CD8-positive, alpha-beta T cell (primary cell): ENCODE measurements at regions of chr2 and their contacts with region 1.

Region 1: DNA sequence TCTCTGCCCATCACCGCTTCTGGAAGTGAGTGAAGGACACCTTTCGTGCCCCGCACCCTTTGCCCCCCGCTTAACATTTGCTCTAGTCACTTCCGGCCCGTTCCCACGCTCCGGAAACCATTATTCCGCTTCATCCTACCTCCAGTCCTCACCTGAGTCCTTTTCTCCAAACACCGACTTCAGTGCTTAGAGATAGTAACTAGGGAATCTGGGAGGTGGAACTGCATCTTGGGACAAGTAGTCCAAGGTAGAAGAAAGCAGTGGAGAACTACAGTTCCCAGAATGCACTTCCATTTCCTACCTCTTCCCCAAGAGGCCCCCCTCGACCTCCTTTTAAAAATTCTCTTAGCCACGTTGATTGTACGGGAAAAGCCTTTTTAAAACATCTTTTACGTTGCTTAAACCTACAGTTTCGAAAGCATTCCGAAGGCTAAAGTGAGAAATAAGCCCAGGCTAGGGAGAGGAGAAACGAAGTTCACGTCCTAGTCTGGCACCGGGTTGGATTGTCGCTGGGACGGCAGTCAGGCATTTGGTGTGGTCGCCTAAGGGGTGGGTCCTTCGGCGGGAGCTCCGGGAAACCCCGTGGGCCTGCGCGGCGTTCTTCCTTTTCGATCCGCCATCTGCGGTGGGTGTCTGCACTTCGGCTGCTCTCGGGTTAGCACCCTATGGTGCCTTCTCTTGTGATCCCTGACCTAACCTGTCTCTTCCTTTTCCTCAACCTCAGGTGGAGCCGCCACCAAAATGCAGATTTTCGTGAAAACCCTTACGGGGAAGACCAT is at the starts of genes CLHC1 and RPS27A:
- DNase-seq: peak; percentile 89 to 97 (median 94)
- ATAC-seq: peak; percentile 87
- H3K4me3 ChIP-seq: peak within 1 kb of the TSS; percentile 97 to 99
- H3K4me3 Mint-ChIP-seq: peak within 1 kb of the TSS; percentile 93
- H3K27ac ChIP-seq: peak within 1 kb of the TSS; percentile 92 to 99
- H3K27ac Mint-ChIP-seq: peak within 1 kb of the TSS; percentile 97
- H3K4me1 ChIP-seq: peaks cover 35% of the 10 kb centered on the region
- H3K4me1 Mint-ChIP-seq: peaks cover 68% of the 10 kb centered on the region
- H3K27me3 ChIP-seq: no peaks in the 10 kb centered on the region
- H3K27me3 Mint-ChIP-seq: no peaks in the 10 kb centered on the region
- CTCF ChIP-seq: no peak
- total RNA-seq, gene CLHC1: 2.2 to 2.3 TPM
- total RNA-seq, gene RPS27A: 2,135 to 2,231 TPM

Region 2: GRCh38 chr2:53767405-53768241 is 1464.7 kb before region 1 on chr2 and contains the start of gene CHAC2:
- CTCF ChIA-PET with region 1: no interaction called
- POLR2A ChIA-PET with region 1: no interaction called
- intact Hi-C with region 1: loop called (anchors 5 kb)
- DNase-seq: peak; percentile 50 to 92 (median 84)
- ATAC-seq: peak; percentile 87
- H3K4me3 ChIP-seq: peak within 1 kb of the TSS; percentile 71 to 96
- H3K4me3 Mint-ChIP-seq: peak within 1 kb of the TSS; percentile 92
- H3K27ac ChIP-seq: peak within 1 kb of the TSS; percentile 70 to 86
- H3K27ac Mint-ChIP-seq: peak within 1 kb of the TSS; percentile 93
- H3K4me1 ChIP-seq: peaks cover 9% of the 10 kb centered on the region
- H3K4me1 Mint-ChIP-seq: peaks cover 29% of the 10 kb centered on the region
- H3K27me3 ChIP-seq: no peaks in the 10 kb centered on the region
- H3K27me3 Mint-ChIP-seq: no peaks in the 10 kb centered on the region
- CTCF ChIP-seq: peak; percentile 31
- total RNA-seq, gene CHAC2: 0.87 to 1.0 TPM

Region 3: GRCh38 chr2:53970724-53971602 is 1261.3 kb before region 1 on chr2 and contains the start of gene PSME4:
- CTCF ChIA-PET with region 1: no interaction called
- POLR2A ChIA-PET with region 1: no interaction called
- intact Hi-C with region 1: loop called (anchors 1 to 10 kb)
- DNase-seq: peak; percentile 88 to 97 (median 93)
- ATAC-seq: peak; percentile 90
- H3K4me3 ChIP-seq: peak within 1 kb of the TSS; percentile 78 to 99
- H3K4me3 Mint-ChIP-seq: peak within 1 kb of the TSS; percentile 95
- H3K27ac ChIP-seq: peak within 1 kb of the TSS; percentile 83 to 92
- H3K27ac Mint-ChIP-seq: peak within 1 kb of the TSS; percentile 98
- H3K4me1 ChIP-seq: peaks cover 25% of the 10 kb centered on the region
- H3K4me1 Mint-ChIP-seq: peaks cover 56% of the 10 kb centered on the region
- H3K27me3 ChIP-seq: no peaks in the 10 kb centered on the region
- H3K27me3 Mint-ChIP-seq: no peaks in the 10 kb centered on the region
- CTCF ChIP-seq: no peak
- total RNA-seq, gene PSME4: 98.8 to 107 TPM

Region 4: DNA sequence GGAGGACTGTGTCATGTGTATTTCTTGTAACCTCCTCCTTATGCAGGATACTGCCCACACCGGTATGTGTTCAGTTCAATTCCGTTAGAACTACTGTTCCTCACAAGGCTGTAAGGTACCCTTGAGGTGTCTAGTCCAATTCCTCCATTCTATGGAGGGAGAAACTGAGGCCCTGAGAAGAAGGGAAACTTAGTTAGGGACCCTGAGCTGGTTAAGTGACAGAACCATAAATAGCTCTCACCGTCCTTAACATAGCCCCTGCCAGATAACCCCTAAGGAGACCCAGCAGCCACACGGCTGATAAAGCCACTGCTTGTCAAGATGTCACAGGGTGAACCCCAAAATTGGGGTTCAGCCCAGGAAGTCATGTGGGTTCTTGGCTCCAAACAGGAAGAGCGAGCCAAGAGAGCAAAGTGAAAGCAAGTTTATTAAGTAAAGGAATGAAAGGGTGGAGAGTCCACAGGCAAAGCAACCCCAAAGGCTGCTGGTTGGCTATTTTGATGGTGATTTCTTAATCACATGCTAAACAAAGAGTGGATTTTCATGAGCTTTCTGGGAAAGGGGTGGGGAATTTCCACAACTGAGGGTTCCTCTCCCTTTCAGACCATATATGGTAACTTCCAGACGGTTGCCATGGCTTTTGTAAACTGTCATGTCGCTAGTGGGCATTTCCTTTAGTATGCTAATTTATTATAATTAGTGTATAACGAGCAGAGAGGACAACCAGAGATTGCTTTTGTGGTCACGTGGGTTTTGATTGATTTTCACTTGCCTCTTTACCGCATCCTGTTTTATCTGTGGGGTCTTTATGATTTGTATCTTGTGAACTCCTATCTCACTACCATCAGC is 98.6 kb before region 1 on chr2:
- CTCF ChIA-PET with region 1: no interaction called
- POLR2A ChIA-PET with region 1: no interaction called
- intact Hi-C with region 1: loop called in 1 of 2 experiments (anchors 5 kb)
- DNase-seq: peak; percentile 4 to 92 (median 35)
- ATAC-seq: peak; percentile 92
- H3K4me3 ChIP-seq: peak overlapping the region; percentile 49 to 51
- H3K4me3 Mint-ChIP-seq: peak overlapping the region; percentile 89
- H3K27ac ChIP-seq: peak overlapping the region; percentile 60 to 93
- H3K27ac Mint-ChIP-seq: peak overlapping the region; percentile 97
- H3K4me1 ChIP-seq: peaks cover 27% of the 10 kb centered on the region
- H3K4me1 Mint-ChIP-seq: peaks cover 43% of the 10 kb centered on the region
- H3K27me3 ChIP-seq: no peaks in the 10 kb centered on the region
- H3K27me3 Mint-ChIP-seq: no peaks in the 10 kb centered on the region
- CTCF ChIP-seq: no peak

Region 5: DNA sequence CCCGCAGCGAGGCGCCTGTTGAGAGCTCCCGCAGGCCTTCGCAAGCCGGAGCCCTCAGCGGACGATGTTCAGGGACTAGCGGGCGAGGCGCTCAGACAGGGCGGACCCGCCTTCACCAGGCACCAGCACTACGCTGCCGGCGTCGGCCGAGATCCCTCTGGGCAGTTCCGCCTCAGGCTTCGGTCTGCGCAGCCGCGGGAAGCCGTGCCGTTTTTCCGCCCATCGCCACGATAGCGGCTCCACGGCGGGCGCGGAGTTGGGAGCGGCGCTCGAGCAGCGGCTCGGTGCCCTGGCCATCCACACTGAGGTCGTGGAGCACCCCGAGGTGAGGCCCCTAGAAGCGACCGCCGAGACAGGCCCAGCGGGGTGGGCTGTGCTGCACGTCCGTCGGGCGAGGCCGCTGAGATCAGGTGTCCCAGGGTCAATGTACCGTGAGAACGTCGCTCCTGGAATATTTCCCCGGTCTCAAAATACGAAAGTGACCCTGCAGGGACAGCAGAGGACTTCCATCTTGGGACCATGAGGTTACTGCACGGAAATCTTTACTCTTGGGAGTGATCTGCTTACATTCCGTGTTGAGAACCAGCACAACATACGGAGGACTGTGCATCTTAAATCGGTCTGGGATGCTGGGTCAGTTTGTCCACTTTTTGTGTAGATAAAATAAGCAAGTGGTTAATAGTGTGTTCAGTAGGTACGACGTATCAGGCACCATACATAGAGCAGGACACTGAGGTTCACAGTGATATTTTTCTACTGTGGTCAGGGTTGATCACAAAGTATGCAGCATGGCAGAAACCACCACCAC is 50.0 kb after region 1 on chr2:
- CTCF ChIA-PET with region 1: no interaction called
- POLR2A ChIA-PET with region 1: no interaction called
- intact Hi-C with region 1: loop called (anchors 1 to 5 kb)
- DNase-seq: peak; percentile 77 to 93 (median 87)
- ATAC-seq: peak; percentile 99
- H3K4me3 ChIP-seq: peak overlapping the region; percentile 62 to 70
- H3K4me3 Mint-ChIP-seq: peak overlapping the region; percentile 94
- H3K27ac ChIP-seq: peak overlapping the region; percentile 72 to 96
- H3K27ac Mint-ChIP-seq: peak overlapping the region; percentile 99
- H3K4me1 ChIP-seq: peaks cover 7% of the 10 kb centered on the region
- H3K4me1 Mint-ChIP-seq: peaks cover 31% of the 10 kb centered on the region
- H3K27me3 ChIP-seq: no peaks in the 10 kb centered on the region
- H3K27me3 Mint-ChIP-seq: no peaks in the 10 kb centered on the region
- CTCF ChIP-seq: no peak

Region 6: DNA sequence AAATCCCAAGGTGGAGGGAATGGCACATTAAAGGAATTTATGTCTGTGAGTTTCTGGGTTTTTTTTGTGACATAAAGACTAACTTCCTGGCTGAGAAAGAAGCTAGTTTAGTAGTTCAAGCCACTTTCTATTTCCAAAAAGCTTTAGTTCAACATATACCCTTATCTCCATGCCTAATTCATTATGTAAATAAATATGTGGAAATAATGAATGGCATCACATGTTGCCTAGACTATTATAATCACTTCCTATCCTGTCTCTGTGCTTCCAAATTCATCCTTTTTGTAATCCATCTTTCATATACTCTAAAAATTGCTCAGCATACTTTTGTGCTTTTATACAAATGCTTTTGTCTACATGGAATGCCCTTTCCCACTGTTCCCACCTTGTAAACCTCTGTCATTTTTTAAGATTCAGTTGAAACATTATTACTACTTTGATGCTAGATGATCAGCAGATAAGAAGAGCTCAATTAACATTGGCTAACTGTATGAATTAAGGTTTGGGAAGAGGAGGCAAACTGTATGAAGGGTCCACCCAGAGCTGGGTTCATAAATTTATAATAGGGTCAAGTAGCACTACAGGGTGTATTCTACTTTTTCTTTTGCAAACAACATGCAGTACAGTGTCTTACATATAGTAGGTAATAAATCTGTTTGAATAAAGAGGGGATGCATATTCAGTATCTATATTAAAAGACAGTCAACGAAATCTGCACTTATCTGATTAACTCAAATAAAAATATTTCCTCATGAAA is 98.4 kb after region 1 on chr2:
- CTCF ChIA-PET with region 1: no interaction called
- POLR2A ChIA-PET with region 1: no interaction called
- intact Hi-C with region 1: no loop called
- DNase-seq: no peak
- ATAC-seq: no peak
- H3K4me3 ChIP-seq: no peak overlapping the region
- H3K4me3 Mint-ChIP-seq: no peak overlapping the region
- H3K27ac ChIP-seq: no peak overlapping the region
- H3K27ac Mint-ChIP-seq: no peak overlapping the region
- H3K4me1 ChIP-seq: no peaks in the 10 kb centered on the region
- H3K4me1 Mint-ChIP-seq: no peaks in the 10 kb centered on the region
- H3K27me3 ChIP-seq: no peaks in the 10 kb centered on the region
- H3K27me3 Mint-ChIP-seq: no peaks in the 10 kb centered on the region
- CTCF ChIP-seq: no peak

Region 7: GRCh38 chr2:55519938-55520885 is 287.9 kb after region 1 on chr2:
- CTCF ChIA-PET with region 1: no interaction called
- POLR2A ChIA-PET with region 1: interaction called, 7 read pairs
- intact Hi-C with region 1: loop called in 1 of 2 experiments (anchors 1 kb)
- DNase-seq: peak in 8 of 9 experiments; percentile 14 to 67 (median 44)
- ATAC-seq: peak; percentile 27
- H3K4me3 ChIP-seq: peak overlapping the region; percentile 85 to 87
- H3K4me3 Mint-ChIP-seq: peak overlapping the region; percentile 97
- H3K27ac ChIP-seq: peak overlapping the region; percentile 85 to 95
- H3K27ac Mint-ChIP-seq: peak overlapping the region; percentile 100
- H3K4me1 ChIP-seq: peaks cover 8% of the 10 kb centered on the region
- H3K4me1 Mint-ChIP-seq: peaks cover 20% of the 10 kb centered on the region
- H3K27me3 ChIP-seq: no peaks in the 10 kb centered on the region
- H3K27me3 Mint-ChIP-seq: no peaks in the 10 kb centered on the region
- CTCF ChIP-seq: no peak